Naive thymus-derived CD8-positive, alpha-beta T cell (primary cell): ENCODE measurements at regions of chr14 and their contacts with region 1.

Region 1: DNA sequence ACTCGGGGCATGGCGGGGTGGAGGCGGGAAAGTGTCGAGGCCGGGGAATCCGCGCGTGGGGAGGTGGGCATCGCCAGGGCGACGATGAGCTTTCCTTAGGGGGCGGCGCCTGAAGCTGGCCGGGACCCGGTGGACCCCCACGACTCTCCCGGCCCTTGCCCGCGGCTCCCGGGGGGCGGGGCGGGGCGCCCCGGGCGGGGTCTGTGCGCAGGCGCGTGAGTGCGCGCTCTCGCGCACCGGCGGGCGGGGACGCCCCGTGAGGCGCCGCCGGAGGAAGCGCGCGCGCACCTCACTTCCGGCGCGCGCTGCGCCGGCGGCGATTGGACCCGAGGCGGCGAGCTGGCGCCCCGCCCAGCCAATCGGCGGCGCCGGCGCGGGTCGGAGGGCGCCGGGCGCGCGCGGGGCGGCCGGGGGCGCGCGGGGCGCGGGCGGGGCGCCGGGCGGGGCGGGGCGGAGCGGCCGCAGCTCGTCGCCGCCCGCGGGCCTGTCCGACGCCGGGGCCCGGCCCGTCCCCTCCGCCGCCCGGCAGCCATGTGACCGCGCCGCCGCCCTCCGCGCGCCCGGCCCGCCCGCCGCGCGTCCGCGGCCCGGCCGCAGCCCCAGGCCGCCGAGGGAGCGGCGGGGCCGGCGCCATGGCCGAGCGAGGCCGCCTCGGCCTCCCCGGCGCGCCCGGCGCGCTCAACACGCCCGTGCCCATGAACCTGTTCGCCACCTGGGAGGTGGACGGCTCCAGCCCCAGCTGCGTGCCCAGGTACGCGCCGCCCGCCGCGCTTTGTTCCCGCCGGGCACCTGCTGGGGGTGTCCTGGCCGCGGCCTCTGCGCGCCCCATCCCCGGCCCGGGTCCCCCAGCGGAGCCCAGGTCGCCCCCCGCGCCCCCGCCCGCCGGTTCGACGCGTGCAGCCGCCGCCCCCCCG is at the start of gene PACS2:
- DNase-seq: peak; percentile 64 to 91 (median 80)
- ATAC-seq: peak; percentile 64 to 67
- H3K4me3 Mint-ChIP-seq: peak within 1 kb of the TSS; percentile 81 to 96 (median 88)
- H3K27ac Mint-ChIP-seq: peak within 1 kb of the TSS; percentile 81 to 93 (median 88)
- H3K4me1 Mint-ChIP-seq: peaks cover 6 to 31% (median 25%) of the 10 kb centered on the region in 4 donors
- H3K27me3 Mint-ChIP-seq: no peaks in the 10 kb centered on the region
- polyA plus RNA-seq, gene PACS2: 1.7 to 6.1 (median 2.3) TPM

Region 2: DNA sequence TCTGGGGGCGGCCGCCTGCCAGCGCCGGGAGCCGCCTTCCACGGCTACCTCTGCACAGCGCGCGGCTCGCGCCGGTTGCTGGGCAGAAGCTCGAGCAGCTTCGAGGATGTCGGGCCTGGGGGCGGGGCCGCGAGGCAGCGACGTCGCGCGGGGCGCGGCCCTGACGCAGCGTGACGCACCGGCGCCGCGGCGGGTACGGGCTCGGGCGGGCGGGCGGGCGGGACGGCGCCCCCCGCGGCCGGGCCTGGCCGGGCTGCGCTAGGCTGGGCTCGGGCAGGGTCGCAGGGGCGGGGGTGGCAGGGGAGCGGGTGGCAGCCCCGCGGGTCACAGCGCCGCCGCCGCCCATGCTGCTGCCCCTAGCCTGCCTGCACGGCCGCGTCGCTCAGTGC is 66.2 kb before region 1 on chr14 and contains the start of gene BTBD6:
- POLR2A ChIA-PET with region 1: interaction called, 22 read pairs
- DNase-seq: peak; percentile 82 to 92 (median 89)
- ATAC-seq: peak; percentile 88 to 92
- H3K4me3 Mint-ChIP-seq: peak within 1 kb of the TSS; percentile 73 to 87 (median 78)
- H3K27ac Mint-ChIP-seq: peak within 1 kb of the TSS; percentile 43 to 92 (median 82)
- H3K4me1 Mint-ChIP-seq: peaks cover 12 to 44% (median 38%) of the 10 kb centered on the region in 4 donors
- H3K27me3 Mint-ChIP-seq: no peaks in the 10 kb centered on the region
- polyA plus RNA-seq, gene BTBD6: 5.5 to 15.6 (median 14.9) TPM

Region 3: DNA sequence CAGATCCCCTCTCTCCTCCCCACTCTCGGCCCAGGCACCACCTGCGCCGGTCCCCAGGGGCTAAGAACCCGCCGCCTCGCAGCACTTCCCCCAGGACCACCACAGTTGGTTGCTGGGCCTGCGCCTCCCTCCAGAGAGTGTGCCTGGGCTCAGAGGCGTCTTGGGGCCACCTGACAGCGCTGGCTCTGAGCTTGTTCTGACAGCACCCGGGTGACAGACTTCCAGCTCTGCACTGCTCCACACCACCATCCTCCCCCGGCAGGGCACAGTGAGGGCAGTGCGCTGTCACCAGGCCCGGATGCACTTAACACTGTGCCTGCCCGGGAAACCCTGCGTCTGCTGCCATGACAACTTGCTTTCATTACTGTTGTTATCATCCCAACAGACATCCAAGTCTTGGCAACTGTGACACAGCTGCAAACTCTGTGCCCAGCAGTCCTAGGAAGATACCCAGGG is 20.4 kb before region 1 on chr14:
- POLR2A ChIA-PET with region 1: interaction called, 114 read pairs
- DNase-seq: peak; percentile 52 to 90 (median 70)
- ATAC-seq: peak; percentile 95 to 96
- H3K4me3 Mint-ChIP-seq: peak overlapping the region; percentile 62 to 89 (median 76)
- H3K27ac Mint-ChIP-seq: peak overlapping the region; percentile 92 to 99 (median 99)
- H3K4me1 Mint-ChIP-seq: peaks cover 21 to 63% (median 47%) of the 10 kb centered on the region in 4 donors
- H3K27me3 Mint-ChIP-seq: no peaks in the 10 kb centered on the region

Region 4: GRCh38 chr14:105300792-105301533 is 13.6 kb before region 1 on chr14 and contains the start of gene BRF1:
- POLR2A ChIA-PET with region 1: interaction called, 114 read pairs
- DNase-seq: peak; percentile 96 to 99 (median 98)
- ATAC-seq: peak; percentile 85 to 89
- H3K4me3 Mint-ChIP-seq: peak within 1 kb of the TSS; percentile 85 to 96 (median 90)
- H3K27ac Mint-ChIP-seq: peak within 1 kb of the TSS; percentile 76 to 98 (median 96)
- H3K4me1 Mint-ChIP-seq: peaks cover 19 to 53% (median 37%) of the 10 kb centered on the region in 4 donors
- H3K27me3 Mint-ChIP-seq: no peaks in the 10 kb centered on the region
- polyA plus RNA-seq, gene BRF1: 7.1 to 10.9 (median 9.2) TPM